ENCODE measurements at regions of chr15 and their contacts with region 1.

Region 1: DNA sequence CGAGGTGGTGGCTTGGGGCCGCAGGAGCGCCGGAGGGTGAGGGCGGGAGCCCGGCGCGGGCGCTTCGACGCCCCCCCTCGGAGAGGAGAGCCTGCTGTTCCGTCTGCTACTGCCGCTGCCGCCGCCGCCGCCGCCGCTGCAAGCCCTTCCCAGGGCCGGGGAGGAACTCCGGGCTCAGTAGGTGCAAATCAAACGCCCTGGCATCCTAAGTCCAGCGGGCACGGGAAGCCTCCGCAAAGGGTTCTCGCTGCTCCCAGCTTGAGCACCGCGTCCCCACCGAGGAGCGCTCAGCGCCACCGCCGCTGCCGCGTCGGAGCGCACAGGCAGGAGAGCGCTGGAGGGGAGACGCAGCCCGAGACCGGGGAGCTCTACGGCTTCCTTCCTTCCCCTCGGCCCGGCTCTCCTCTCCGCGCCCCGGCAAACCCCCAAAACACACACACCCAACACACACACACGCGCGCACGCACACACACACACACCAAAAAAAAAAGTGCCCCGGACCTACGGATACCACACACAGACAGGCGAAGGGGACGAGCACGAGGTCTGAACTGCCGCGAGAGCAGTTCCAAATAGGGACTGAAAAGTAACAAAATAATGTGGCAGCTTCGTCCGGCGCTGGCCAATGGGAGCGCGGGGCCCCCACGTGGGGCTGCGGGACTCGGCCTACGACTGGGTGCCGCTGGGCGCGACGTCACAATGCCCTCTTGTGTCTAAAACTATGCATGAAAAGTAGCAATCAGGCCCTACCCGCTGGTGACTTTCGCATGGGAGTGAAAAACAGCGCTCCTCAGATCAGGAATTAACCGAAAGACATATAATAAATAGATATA is at the start of gene TLE3:
- DNase-seq: peak; percentile 97
- H3K4me3 Mint-ChIP-seq: peak within 1 kb of the TSS; percentile 98
- H3K27ac Mint-ChIP-seq: peak within 1 kb of the TSS; percentile 99
- H3K4me1 Mint-ChIP-seq: peaks cover 57% of the 10 kb centered on the region
- H3K27me3 Mint-ChIP-seq: peaks cover 19% of the 10 kb centered on the region
- total RNA-seq, gene TLE3: 123 and 126 TPM in 2 replicates

Region 2: GRCh38 chr15:69452692-69453521 is 644.6 kb before region 1 on chr15 and contains the start of gene RPLP1:
- intact Hi-C with region 1: loop called (anchors 2 kb)
- DNase-seq: peak; percentile 93
- H3K4me3 Mint-ChIP-seq: peak within 1 kb of the TSS; percentile 99
- H3K27ac Mint-ChIP-seq: peak within 1 kb of the TSS; percentile 100
- H3K4me1 Mint-ChIP-seq: peaks cover 35% of the 10 kb centered on the region
- H3K27me3 Mint-ChIP-seq: no peaks in the 10 kb centered on the region
- total RNA-seq, gene RPLP1: 1,633 and 1,710 TPM in 2 replicates

Region 3: DNA sequence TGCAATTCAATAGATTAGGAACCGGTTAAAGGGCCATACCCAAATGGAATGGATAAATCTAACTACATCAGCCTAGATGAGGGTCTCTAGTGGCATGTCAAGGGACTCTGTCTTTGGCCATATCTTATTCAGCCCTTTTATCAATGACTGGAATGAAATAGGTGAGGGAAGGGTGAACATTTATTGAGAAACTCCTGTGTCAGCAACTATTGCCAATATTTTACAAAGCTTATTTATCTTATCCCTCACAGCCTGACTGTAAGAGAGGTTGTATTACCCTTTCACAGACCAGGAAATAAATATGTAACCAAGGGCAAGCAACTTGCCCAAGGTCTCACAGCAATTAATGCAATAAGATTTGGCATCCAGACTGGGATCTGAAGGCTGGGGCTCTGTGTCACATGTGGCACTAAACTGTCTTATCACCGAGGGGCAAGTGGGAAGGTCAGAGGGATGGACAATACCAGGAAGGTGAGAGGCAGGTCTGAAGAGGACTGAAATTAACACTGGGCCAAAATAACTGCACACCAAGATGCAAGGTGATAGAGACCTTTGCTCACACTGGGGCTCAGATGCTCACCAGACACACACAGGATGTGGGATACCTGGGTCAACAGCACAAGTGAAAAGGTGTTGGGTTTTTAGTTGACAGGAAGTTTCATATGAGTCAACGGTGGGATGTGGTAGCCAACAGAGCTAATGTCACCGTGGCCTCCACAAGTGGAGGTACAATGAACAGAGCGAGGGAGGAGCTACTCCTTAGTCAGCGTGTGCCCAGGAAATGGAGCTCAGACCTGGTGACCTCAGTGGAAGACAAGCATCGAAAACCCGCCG is 383.6 kb before region 1 on chr15:
- intact Hi-C with region 1: loop called (anchors 1 kb)
- DNase-seq: peak; percentile 79
- H3K4me3 Mint-ChIP-seq: peak overlapping the region; percentile 40
- H3K27ac Mint-ChIP-seq: peak overlapping the region; percentile 85
- H3K4me1 Mint-ChIP-seq: peaks cover 49% of the 10 kb centered on the region
- H3K27me3 Mint-ChIP-seq: peaks cover 19% of the 10 kb centered on the region

Region 4: GRCh38 chr15:69760890-69761568 is 336.5 kb before region 1 on chr15:
- intact Hi-C with region 1: loop called (anchors 1 kb)
- DNase-seq: peak; percentile 79
- H3K4me3 Mint-ChIP-seq: peak overlapping the region; percentile 72
- H3K27ac Mint-ChIP-seq: peak overlapping the region; percentile 92
- H3K4me1 Mint-ChIP-seq: peaks cover 81% of the 10 kb centered on the region
- H3K27me3 Mint-ChIP-seq: peaks cover 2% of the 10 kb centered on the region

Region 5: DNA sequence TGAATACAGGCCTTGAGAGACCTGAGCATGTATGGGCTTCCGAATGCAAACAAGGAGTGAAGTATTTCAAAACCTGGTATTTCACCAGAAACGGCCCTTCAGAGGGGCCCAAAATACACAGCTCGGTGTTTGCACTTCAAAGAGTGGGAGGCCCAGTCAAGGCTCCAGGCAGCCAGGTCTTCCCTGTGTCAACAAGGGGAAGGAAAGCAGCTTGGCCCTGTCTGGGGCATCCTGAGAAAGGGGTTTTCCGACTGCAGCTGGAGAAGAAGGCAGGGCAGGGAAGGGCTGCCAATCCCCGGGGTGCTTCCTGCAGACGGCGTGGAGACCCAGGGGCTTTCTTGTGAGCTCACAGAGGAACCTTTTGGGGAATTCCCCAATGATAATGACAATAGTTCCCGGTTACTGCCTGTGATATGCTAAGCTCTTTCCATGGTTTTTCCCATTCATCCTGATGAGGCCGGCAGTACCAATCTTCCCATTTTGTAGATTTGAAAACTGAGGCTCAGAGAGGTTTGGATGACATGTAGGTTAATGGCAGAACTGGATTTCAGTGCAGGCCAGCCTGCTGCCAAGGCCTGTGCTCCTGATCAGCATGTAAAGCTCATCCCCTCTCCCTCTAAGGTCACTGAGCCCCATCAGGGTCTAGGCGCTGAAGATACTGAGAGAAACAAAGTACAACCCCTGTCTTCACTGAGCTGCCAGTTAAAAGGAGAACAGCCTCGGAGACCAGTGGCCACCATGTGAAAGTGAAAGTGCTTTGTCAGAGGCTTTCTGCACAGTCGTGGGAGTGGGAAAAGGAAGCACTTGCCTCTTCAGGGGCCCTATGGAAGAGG is 43.2 kb after region 1 on chr15:
- intact Hi-C with region 1: loop called (anchors 1 kb)
- DNase-seq: peak; percentile 8
- H3K4me3 Mint-ChIP-seq: peak overlapping the region; percentile 54
- H3K27ac Mint-ChIP-seq: peak overlapping the region; percentile 53
- H3K4me1 Mint-ChIP-seq: peaks cover 33% of the 10 kb centered on the region
- H3K27me3 Mint-ChIP-seq: peaks cover 28% of the 10 kb centered on the region

Region 6: GRCh38 chr15:70505411-70505919 is 407.9 kb after region 1 on chr15:
- intact Hi-C with region 1: loop called (anchors 1 kb)
- DNase-seq: no peak
- H3K4me3 Mint-ChIP-seq: peak overlapping the region; percentile 42
- H3K27ac Mint-ChIP-seq: peak overlapping the region; percentile 72
- H3K4me1 Mint-ChIP-seq: peaks cover 86% of the 10 kb centered on the region
- H3K27me3 Mint-ChIP-seq: peaks cover 7% of the 10 kb centered on the region